ENCODE measurements at regions of chr10 and their contacts with region 1.

Region 1: GRCh38 chr10:77873536-77874380 is 52.8 kb downstream of the DLG5 start:
- DNase-seq: peak; percentile 70
- ATAC-seq: peak; percentile 43
- H3K4me3 ChIP-seq: no peak overlapping the region
- H3K27ac ChIP-seq: no peak overlapping the region
- H3K4me1 ChIP-seq: peaks cover 40% of the 10 kb centered on the region
- H3K27me3 ChIP-seq: no peaks in the 10 kb centered on the region
- CTCF ChIP-seq: no peak
- EP300 ChIP-seq: no peak
- POLR2A ChIP-seq: no peak
- RAD21 ChIP-seq: no peak

Region 2: GRCh38 chr10:77889277-77889903 is 15.6 kb after region 1 on chr10:
- CTCF ChIA-PET with region 1: no interaction called
- POLR2A ChIA-PET with region 1: interaction called, 13 read pairs
- in situ Hi-C with region 1: no loop called
- intact Hi-C with region 1: no loop called
- DNase-seq: peak; percentile 93
- ATAC-seq: peak; percentile 92
- H3K4me3 ChIP-seq: peak overlapping the region; percentile 22 to 60 (median 44); a peak in 4 of 6 replicates
- H3K27ac ChIP-seq: peak overlapping the region; percentile 83
- H3K4me1 ChIP-seq: peaks cover 95% of the 10 kb centered on the region
- H3K27me3 ChIP-seq: no peaks in the 10 kb centered on the region
- CTCF ChIP-seq: peak; percentile 44
- EP300 ChIP-seq: no peak
- POLR2A ChIP-seq: peak; percentile 65 to 77; a peak in 3 of 4 replicates
- RAD21 ChIP-seq: peak; percentile 36; the same call in 1 of the 2 replicates

Region 3: GRCh38 chr10:77970869-77971803 is 97.4 kb after region 1 on chr10:
- CTCF ChIA-PET with region 1: no interaction called
- POLR2A ChIA-PET with region 1: no interaction called
- in situ Hi-C with region 1: no loop called
- intact Hi-C with region 1: no loop called
- DNase-seq: peak; percentile 92
- ATAC-seq: peak; percentile 84
- H3K4me3 ChIP-seq: no peak overlapping the region; a peak in 1 of 6 replicates
- H3K27ac ChIP-seq: peak overlapping the region; percentile 62
- H3K4me1 ChIP-seq: peaks cover 78% of the 10 kb centered on the region
- H3K27me3 ChIP-seq: no peaks in the 10 kb centered on the region
- CTCF ChIP-seq: 0 out of 2 replicates have a peak, but pooled peaks have one; percentile 10
- EP300 ChIP-seq: peak in 1 of 2 experiments; percentile 84; a peak in 2 of 4 replicates
- POLR2A ChIP-seq: no peak
- RAD21 ChIP-seq: no peak